Activated CD8-positive, alpha-beta T cell treated with anti-CD3 and anti-CD28 coated beads, Interleukin-2, amount 10 ng/mL, durations not matched to agents 7 days and 5 days (primary cell): ENCODE measurements at regions of chr4 and their contacts with region 1.

Region 1: GRCh38 chr4:73258686-73259570 is at the start of gene ANKRD17:
- DNase-seq: peak; percentile 93
- ATAC-seq: peak; percentile 79
- H3K4me3 Mint-ChIP-seq: peak within 1 kb of the TSS; percentile 99
- H3K27ac Mint-ChIP-seq: peak within 1 kb of the TSS; percentile 100
- H3K4me1 Mint-ChIP-seq: peaks cover 47% of the 10 kb centered on the region
- H3K27me3 Mint-ChIP-seq: no peaks in the 10 kb centered on the region
- total RNA-seq, gene ANKRD17: 45.8 to 46.6 TPM

Region 2: DNA sequence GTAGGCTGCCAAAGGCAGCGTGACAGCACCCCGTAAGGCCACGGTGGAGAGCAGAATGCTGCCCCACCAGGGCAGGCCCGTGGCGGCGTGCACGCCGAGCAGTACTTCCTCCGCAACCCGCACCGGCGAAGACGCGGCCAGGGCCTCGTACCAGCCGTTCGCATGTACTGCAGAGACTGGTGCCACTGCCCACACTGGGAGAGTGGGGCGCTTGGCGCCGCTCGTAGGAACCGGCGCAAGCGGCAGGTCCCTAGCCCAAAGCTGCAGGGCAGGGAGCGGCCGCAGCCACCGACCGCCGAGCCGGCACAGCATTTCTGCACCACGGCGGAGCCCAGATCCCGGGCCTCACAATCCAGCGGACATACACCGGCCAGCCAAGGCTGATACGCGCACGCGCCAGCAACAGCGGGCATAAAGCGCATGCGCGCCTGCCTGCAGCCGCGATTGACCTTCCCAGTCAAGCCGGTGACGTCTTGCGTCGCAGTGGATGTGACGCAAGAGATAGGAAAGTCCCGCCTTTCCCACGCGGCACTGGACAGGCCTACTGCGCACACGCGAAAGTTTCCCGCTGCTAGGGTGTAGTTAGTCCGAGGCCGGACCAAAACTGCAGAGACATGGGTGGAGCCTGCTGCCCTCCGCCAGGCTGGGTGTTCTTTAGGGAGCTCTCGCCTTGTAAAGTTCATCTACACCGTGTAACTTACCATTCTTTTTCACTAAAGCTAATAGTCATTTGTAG is 189.4 kb before region 1 on chr4 and contains the start of gene COX18:
- CTCF ChIA-PET with region 1: interaction called, 21 read pairs
- POLR2A ChIA-PET with region 1: interaction called, 31 read pairs
- DNase-seq: peak; percentile 96
- ATAC-seq: peak; percentile 84
- H3K4me3 Mint-ChIP-seq: peak within 1 kb of the TSS; percentile 83
- H3K27ac Mint-ChIP-seq: peak within 1 kb of the TSS; percentile 94
- H3K4me1 Mint-ChIP-seq: peaks cover 32% of the 10 kb centered on the region
- H3K27me3 Mint-ChIP-seq: no peaks in the 10 kb centered on the region
- total RNA-seq, gene COX18: 14.7 to 15.5 TPM

Region 3: DNA sequence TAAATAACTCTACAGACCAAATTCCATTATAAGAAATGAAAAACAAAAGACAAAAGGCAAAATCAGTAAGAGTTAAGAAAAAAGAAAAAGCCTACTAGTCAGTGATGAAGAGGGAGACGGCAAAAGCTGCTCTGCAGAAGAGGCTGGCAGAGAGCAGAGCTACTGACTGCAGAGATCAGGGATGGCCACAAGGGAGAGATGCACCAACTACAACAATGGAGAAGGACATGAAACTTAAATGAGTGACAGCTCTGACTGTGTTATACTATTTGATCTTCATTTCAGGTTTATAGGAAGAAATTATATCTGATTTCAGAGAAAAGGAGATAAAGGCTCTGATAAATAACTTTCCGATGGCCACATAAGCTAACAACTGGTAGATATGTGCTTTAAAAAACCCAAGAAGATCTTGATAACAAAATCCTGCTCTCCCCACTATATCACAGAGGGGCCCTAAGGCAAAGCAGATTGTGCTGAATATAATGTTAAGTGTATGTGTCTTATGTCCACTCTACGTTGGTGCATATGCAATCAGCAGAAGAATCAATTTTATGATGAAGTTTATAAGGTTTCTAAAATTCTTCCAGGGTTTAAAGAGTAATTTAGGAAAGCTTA is 131.0 kb before region 1 on chr4:
- CTCF ChIA-PET with region 1: interaction called, 30 read pairs
- POLR2A ChIA-PET with region 1: interaction called, 3 read pairs
- DNase-seq: no peak
- ATAC-seq: peak; percentile 81
- H3K4me3 Mint-ChIP-seq: no peak overlapping the region
- H3K27ac Mint-ChIP-seq: no peak overlapping the region
- H3K4me1 Mint-ChIP-seq: no peaks in the 10 kb centered on the region
- H3K27me3 Mint-ChIP-seq: no peaks in the 10 kb centered on the region

Region 4: DNA sequence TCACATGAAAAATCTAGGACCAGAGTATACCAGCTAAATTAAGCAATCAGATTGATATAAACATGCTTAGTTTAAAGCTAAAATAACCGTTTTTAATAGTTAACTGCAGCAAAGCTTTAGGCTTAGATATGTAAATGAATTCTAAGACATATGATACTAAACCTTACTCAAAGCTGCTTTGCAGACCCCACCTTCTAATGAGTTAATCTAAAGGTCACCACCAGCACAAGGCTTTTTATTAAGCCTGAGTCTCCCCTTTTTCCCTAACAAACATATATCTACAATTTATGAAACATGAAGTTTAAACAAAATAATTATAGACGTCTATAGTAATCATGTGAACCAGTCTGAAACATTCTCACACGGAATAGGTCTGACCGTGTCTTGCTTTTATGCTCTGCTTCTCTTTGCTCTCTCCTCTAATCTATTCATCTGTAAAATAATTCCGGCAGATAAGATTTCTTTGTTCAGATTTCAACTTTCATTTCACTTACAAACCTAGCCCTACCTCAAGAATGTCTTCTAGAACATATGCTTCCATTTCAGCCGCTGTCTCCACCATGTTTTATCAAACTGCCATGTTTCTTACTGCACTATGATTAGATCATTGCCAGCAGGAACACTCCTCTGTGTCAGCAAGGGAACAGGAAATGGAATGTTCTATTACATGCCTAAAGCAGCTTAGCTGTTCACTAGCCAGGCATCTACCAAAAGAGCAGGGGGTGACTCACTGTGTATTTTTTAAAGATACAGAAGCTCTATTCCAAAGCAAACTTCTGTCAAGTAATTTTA is 36.3 kb before region 1 on chr4:
- CTCF ChIA-PET with region 1: interaction called, 39 read pairs
- POLR2A ChIA-PET with region 1: interaction called, 24 read pairs
- DNase-seq: peak; percentile 77
- ATAC-seq: peak; percentile 100
- H3K4me3 Mint-ChIP-seq: no peak overlapping the region
- H3K27ac Mint-ChIP-seq: no peak overlapping the region
- H3K4me1 Mint-ChIP-seq: peaks cover 24% of the 10 kb centered on the region
- H3K27me3 Mint-ChIP-seq: no peaks in the 10 kb centered on the region

Region 5: DNA sequence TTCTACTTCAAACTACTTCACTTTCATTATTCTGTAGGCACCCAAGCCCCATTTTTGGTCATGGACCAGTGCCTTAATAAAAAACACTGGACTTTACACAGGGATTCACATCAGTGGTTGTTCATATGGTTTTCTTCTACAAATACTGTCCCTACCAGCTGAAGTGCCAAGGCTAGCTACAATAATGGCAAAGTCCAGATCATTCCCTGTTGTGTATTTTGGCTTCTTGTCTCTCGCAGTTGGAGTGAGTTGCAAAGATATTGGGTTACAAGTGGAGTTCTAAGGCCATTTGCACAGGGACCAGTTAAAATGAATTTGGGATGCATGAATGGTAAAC is 16.4 kb after region 1 on chr4:
- CTCF ChIA-PET with region 1: no interaction called
- POLR2A ChIA-PET with region 1: no interaction called
- DNase-seq: no peak
- ATAC-seq: no peak
- H3K4me3 Mint-ChIP-seq: no peak overlapping the region
- H3K27ac Mint-ChIP-seq: no peak overlapping the region
- H3K4me1 Mint-ChIP-seq: no peaks in the 10 kb centered on the region
- H3K27me3 Mint-ChIP-seq: no peaks in the 10 kb centered on the region